Aorta (tissue), 5 donors: ENCODE measurements at regions of chr1 and their contacts with region 1.

Region 1: GRCh38 chr1:27321813-27322577 is at the start of gene TMEM222:
- DNase-seq: peak; percentile 99 to 100
- ATAC-seq: peak; percentile 100
- H3K4me3 ChIP-seq: peak within 1 kb of the TSS; percentile 55 to 98
- H3K27ac ChIP-seq: peak within 1 kb of the TSS; percentile 28 to 50
- H3K4me1 ChIP-seq: no peaks in the 10 kb centered on the region
- H3K27me3 ChIP-seq: no peaks in the 10 kb centered on the region
- total RNA-seq, gene TMEM222: 27.4 to 32.4 TPM

Region 2: DNA sequence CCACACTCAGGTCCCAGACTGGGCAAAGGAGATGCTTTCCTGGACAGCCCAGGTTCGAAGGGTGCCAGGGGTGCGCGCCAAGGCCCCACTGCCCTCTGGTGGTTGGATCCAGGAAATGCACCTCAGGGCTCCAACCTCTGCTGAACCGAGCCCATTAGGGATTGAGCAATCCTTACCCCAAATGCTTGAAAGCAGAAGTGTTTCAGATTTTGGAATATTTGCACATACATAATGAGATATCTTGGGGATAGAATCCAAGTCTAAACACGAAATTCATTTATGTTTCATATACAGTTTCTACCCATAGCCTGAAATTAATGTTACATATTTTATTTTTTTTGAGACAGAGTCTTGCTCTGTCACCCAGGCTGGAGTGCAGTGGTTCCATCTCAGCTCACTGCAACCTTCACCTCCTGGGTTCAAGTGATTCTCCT is 224.5 kb before region 1 on chr1:
- intact Hi-C with region 1: no loop called
- DNase-seq: peak; percentile 85 to 91
- ATAC-seq: peak; percentile 88
- H3K4me3 ChIP-seq: no peak overlapping the region
- H3K27ac ChIP-seq: no peak overlapping the region
- H3K4me1 ChIP-seq: no peaks in the 10 kb centered on the region
- H3K27me3 ChIP-seq: no peaks in the 10 kb centered on the region

Region 3: DNA sequence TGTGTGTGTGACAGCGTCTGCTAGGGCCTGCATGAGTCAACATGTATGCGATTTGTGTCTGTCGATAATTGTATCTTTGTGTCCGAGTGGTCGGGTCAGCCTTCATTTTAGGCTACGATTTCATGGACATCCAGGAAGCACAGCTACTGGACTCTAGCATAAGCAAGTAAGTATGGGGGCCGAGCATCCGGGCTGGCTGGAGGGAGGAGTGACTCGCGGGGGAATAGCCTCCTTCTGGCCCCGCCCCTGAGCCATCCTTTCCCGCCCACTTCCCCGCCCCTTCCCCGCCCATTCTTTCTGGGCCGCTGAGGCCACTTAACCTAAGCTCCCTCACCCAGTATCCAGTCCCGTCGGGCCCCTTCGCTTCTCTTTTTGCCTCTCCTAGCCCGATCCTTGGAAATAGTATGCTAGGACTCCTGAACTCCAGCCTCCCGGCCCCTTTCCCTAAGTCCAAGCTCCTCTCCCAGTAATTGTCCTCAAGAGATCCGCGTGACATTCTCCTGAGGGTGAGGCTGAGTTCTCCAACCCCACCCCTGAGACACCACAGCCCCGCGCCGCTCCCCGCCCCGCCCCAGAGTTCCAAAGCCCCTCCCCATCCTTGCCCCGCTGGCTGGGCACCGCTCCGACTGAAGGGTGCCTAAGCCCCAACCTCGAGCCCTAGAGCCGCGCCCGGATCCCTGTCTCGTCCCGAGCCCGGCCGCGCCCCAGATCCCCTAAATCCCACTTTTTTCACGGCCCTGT is 43.5 kb after region 1 on chr1:
- intact Hi-C with region 1: loop called (anchors 1 to 2 kb)
- DNase-seq: peak; percentile 92 to 97
- ATAC-seq: peak; percentile 91
- H3K4me3 ChIP-seq: peak overlapping the region; percentile 82 to 87
- H3K27ac ChIP-seq: peak overlapping the region; percentile 45 to 93
- H3K4me1 ChIP-seq: no peaks in the 10 kb centered on the region
- H3K27me3 ChIP-seq: no peaks in the 10 kb centered on the region

Region 4: GRCh38 chr1:27405074-27405473 is 83.1 kb after region 1 on chr1:
- intact Hi-C with region 1: no loop called
- DNase-seq: peak in 1 of 2 donors; percentile 79
- ATAC-seq: no peak
- H3K4me3 ChIP-seq: no peak overlapping the region
- H3K27ac ChIP-seq: peak overlapping the region in 1 of 2 donors; percentile 38
- H3K4me1 ChIP-seq: no peaks in the 10 kb centered on the region
- H3K27me3 ChIP-seq: no peaks in the 10 kb centered on the region